ENCODE measurements at regions of chr11 and their contacts with region 1.

Region 1: DNA sequence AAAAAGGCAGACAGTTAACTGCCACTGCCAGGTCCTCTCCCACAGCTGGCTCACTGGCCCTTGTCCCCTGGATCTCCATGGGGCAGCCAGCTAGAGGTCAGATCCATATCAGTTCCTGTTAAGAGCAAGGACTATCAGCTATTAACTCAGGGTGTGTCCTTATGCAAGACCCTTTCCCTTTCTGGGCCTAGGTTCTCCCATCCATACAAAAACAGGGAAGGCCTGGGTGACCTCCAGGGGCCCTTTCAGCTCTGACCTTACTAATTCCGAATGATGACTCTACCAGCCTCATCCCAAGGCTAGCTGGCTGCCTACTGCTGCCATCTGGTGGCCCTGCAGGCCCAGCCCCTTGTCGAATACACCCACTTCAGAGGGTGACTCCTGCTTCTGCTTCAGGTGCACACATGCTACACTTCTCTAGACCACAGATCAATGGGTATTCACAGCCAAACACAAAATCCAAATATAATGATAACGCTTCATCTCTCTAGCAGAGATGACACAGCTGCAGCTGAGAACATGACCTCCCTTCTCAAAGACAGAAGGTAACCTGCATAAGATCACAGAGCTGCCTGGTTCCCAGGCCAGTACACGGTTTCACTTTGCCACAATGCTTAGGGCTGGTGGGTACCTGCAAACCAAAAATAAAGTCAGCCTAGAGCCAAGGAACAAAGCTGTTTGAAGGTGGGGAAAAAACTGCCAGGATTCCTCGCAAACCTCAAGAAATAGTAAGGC is 34.1 kb downstream of the SERGEF start:
- DNase-seq: peak; percentile 43 to 76
- H3K4me3 ChIP-seq: no peak overlapping the region
- H3K27ac ChIP-seq: no peak overlapping the region
- H3K4me1 ChIP-seq: peaks cover 0 to 6% (median 2%) of the 10 kb centered on the region in 4 donors
- H3K27me3 ChIP-seq: no peaks in the 10 kb centered on the region
- CTCF ChIP-seq: peak in 5 of 7 experiments; percentile 34 to 55 (median 38)
- EP300 ChIP-seq: no peak
- POLR2A ChIP-seq: no peak

Region 2: GRCh38 chr11:17601256-17601671 is 377.5 kb before region 1 on chr11:
- intact Hi-C with region 1: loop called (anchors 10 kb)
- DNase-seq: no peak
- H3K4me3 ChIP-seq: no peak overlapping the region
- H3K27ac ChIP-seq: no peak overlapping the region
- H3K4me1 ChIP-seq: peaks cover 0 to 3% (median 0%) of the 10 kb centered on the region in 4 donors
- H3K27me3 ChIP-seq: peaks cover 0 to 21% (median 0%) of the 10 kb centered on the region in 3 donors
- CTCF ChIP-seq: no peak
- EP300 ChIP-seq: no peak
- POLR2A ChIP-seq: no peak

Region 3: DNA sequence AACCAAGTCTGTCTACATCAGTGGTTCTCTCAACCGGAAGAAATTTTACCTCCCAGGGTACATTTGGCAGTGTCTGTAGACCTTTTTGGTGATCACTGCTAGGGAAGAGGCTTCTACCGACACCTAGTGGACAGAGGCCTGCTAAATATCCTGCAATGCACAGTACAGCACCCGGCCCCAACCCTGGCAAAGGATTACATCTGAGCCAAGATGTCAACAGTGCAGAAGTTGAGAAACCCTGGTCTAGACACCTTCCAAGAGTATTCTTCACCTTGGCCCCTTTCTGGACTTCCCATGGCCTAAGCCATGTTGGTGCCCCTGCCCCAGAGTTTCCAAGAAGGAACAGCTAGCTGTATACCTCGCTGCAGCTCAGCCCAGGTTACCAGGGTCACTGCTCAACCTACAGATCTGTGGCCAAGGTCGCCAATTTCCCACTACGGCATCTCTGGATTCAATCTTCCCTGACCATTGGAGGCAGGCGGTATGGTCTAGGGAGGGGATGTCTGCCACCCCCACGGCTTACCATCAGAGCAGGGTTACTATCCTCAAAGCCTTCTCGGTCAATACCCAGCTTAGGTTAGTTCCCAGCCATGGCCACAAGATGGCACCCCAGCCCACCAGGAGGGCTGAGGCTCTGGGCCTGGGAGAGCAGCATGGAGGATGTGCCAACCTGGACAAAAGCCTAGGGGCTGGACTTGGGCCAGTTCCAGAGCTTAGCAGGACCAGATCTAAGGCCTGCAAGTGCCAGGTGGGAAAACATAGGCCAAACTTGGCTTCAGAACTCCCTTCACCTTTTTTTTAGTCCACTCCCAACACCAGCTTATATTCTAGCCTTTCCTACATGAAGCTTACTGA is 247.9 kb before region 1 on chr11:
- intact Hi-C with region 1: loop called (anchors 5 kb)
- DNase-seq: peak; percentile 92 to 93
- H3K4me3 ChIP-seq: no peak overlapping the region
- H3K27ac ChIP-seq: no peak overlapping the region
- H3K4me1 ChIP-seq: peaks cover 15 to 20% (median 19%) of the 10 kb centered on the region in 4 donors
- H3K27me3 ChIP-seq: peaks cover 2 to 60% (median 24%) of the 10 kb centered on the region in 3 donors
- CTCF ChIP-seq: peak in 5 of 7 experiments; percentile 75 to 91 (median 79)
- EP300 ChIP-seq: no peak
- POLR2A ChIP-seq: no peak

Measured in stomach (tissue), 19 donors.